HEK293 (cell line): ENCODE measurements at regions of chr7 and their contacts with region 1.

Region 1: GRCh38 chr7:131792311-131792710 is 235.9 kb upstream of the PODXL start:
- H3K4me3 ChIP-seq: no peak overlapping the region
- H3K27ac ChIP-seq: no peak overlapping the region
- H3K4me1 ChIP-seq: no peaks in the 10 kb centered on the region
- CTCF ChIP-seq: no peak

Region 2: DNA sequence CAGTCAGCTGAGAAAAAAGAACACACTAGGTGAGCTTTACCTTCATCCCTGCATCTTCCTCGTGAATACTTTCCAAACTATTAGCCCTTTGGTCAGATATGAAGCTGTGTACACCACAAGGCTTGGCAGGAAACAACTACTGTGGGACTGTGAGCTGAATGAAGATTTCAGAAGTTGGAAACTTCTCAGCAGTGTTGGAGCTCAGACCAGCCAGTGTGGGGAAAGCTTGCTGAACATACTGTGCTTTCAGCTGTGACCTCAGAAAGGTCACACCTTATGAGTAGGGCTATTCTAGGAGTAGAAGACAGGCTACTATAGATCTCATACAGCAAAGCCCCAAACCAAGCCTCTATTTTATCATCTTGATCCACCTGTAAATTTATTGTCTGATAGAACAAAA is 1584.2 kb after region 1 on chr7:
- CTCF ChIA-PET with region 1: no interaction called
- POLR2A ChIA-PET with region 1: interaction called, 14 read pairs
- H3K4me3 ChIP-seq: no peak overlapping the region
- H3K27ac ChIP-seq: no peak overlapping the region
- H3K4me1 ChIP-seq: no peaks in the 10 kb centered on the region
- CTCF ChIP-seq: no peak